Dorsolateral prefrontal cortex (tissue), 120 donors: ENCODE measurements at regions of chr5 and their contacts with region 1.

Region 1: GRCh38 chr5:71782771-71783770 is 64.0 kb downstream of the CARTPT start:
- DNase-seq: peak; percentile 79 to 94 (median 90)
- H3K4me3 ChIP-seq: peak overlapping the region; percentile 5 to 65 (median 47)
- H3K27ac ChIP-seq: peak overlapping the region in 41 of 59 donors; percentile 0 to 76 (median 50)
- H3K27me3 ChIP-seq: no peaks in the 10 kb centered on the region
- CTCF ChIP-seq: peak; percentile 70 to 95 (median 88)

Region 2: GRCh38 chr5:71757590-71758543 is 25.2 kb before region 1 on chr5:
- intact Hi-C with region 1: no loop called
- DNase-seq: peak in 9 of 10 donors; percentile 43 to 84 (median 69)
- H3K4me3 ChIP-seq: peak overlapping the region in 56 of 59 donors; percentile 2 to 65 (median 46)
- H3K27ac ChIP-seq: peak overlapping the region in 3 of 59 donors; percentile 5 to 58 (median 14)
- H3K27me3 ChIP-seq: no peaks in the 10 kb centered on the region
- CTCF ChIP-seq: peak in 55 of 56 donors; percentile 43 to 82 (median 69)

Region 3: GRCh38 chr5:71932655-71933338 is 149.7 kb after region 1 on chr5:
- intact Hi-C with region 1: loop called in 1 of 2 experiments (anchors 10 kb)
- DNase-seq: peak in 9 of 10 donors; percentile 29 to 71 (median 54)
- H3K4me3 ChIP-seq: no peak overlapping the region
- H3K27ac ChIP-seq: peak overlapping the region in 47 of 59 donors; percentile 1 to 76 (median 39)
- H3K27me3 ChIP-seq: no peaks in the 10 kb centered on the region
- CTCF ChIP-seq: peak in 1 of 56 donors; percentile 12

Region 4: DNA sequence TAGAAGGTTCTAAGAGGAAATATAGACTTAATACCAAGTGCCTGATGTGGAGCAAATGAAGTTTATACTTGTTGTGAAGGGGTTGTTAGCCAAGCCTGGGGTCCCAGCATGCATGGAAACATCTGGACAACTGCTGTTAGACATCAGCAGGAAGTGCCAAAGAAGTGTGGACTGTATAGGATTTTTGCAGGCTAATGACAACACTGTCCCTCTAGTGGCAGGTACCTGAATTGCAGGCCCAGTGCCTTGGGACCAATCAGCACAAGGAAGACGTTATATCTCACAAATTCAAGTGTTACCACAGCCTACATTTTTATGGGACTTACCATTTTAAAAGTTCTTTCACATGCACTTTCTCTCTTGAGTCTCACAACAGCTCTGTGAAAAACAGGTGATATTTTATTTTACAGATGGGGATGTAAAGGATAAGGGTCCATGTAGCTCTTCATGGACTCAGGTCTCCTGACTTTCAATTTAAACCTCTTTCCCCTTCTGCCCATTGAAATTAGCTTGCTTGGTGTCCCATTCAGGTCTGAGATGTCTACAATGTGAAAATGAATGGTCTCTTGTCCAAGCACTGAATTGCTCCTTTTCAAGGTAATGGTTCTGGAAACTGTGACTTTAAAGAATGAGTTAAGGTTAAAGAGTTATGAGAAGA is 235.2 kb after region 1 on chr5:
- intact Hi-C with region 1: loop called in 1 of 2 experiments (anchors 5 kb)
- DNase-seq: no peak
- H3K4me3 ChIP-seq: no peak overlapping the region
- H3K27ac ChIP-seq: no peak overlapping the region
- H3K27me3 ChIP-seq: no peaks in the 10 kb centered on the region
- CTCF ChIP-seq: peak; percentile 46 to 80 (median 66)

Region 5: GRCh38 chr5:72108202-72109061 is 325.4 kb after region 1 on chr5:
- intact Hi-C with region 1: loop called (anchors 2 to 5 kb)
- DNase-seq: peak; percentile 67 to 86 (median 78)
- H3K4me3 ChIP-seq: peak overlapping the region; percentile 68 to 97 (median 86)
- H3K27ac ChIP-seq: peak overlapping the region; percentile 46 to 98 (median 92)
- H3K27me3 ChIP-seq: no peaks in the 10 kb centered on the region
- CTCF ChIP-seq: peak in 8 of 56 donors; percentile 9 to 29 (median 15)

Region 6: DNA sequence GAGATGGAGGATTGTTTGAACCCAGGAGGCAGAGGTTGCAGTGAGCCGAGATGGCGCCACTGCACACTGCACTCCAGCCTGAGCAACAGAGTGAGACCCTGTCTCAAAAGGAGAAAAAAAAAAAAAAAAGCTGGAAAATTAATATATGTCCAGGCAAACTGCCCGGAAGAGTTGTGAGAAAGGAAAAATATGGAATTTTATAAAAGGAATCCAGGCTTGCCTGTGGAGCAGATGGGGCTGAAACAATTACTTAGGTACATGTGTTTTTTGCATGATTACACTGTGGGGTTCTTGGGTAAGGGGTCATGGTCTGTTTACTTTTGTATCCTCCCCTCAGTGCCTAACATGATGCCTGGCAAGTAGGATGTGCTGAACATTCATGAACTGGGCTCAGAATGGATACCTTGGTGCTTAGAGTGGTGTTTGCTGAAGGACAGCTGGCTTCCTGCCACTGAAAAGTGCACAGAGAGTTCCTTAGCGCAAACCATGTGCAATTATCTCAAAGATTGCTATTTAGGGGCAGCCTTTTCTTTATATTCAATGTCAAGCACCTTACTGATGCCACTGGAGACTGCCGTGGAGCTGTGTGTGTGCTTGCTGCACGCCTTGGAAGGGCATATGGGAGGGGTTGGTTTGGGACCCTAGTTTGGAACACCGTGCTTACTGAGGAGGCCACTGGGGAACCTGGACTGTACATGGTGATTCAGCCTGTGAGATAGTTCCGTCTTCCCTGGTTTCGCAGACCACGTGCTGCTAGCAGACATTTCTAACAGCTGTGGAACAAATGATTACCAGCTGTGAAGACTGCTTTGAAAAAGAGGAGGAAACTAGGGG is 402.6 kb after region 1 on chr5:
- intact Hi-C with region 1: loop called in 1 of 2 experiments (anchors 10 kb)
- DNase-seq: no peak
- H3K4me3 ChIP-seq: peak overlapping the region in 2 of 59 donors; percentile 5 to 8
- H3K27ac ChIP-seq: peak overlapping the region in 38 of 59 donors; percentile 1 to 92 (median 46)
- H3K27me3 ChIP-seq: no peaks in the 10 kb centered on the region
- CTCF ChIP-seq: no peak

Region 7: GRCh38 chr5:72307968-72308852 is 525.1 kb after region 1 on chr5:
- intact Hi-C with region 1: loop called (anchors 1 to 2 kb)
- DNase-seq: peak; percentile 96 to 98 (median 98)
- H3K4me3 ChIP-seq: peak overlapping the region; percentile 49 to 92 (median 75)
- H3K27ac ChIP-seq: peak overlapping the region; percentile 80 to 99 (median 92)
- H3K27me3 ChIP-seq: no peaks in the 10 kb centered on the region
- CTCF ChIP-seq: peak; percentile 76 to 99 (median 98)

Region 8: GRCh38 chr5:72328172-72328571 is 545.1 kb after region 1 on chr5:
- intact Hi-C with region 1: loop called in 1 of 2 experiments (anchors 5 kb)
- DNase-seq: peak; percentile 44 to 84 (median 72)
- H3K4me3 ChIP-seq: no peak overlapping the region
- H3K27ac ChIP-seq: peak overlapping the region in 31 of 59 donors; percentile 0 to 70 (median 41)
- H3K27me3 ChIP-seq: no peaks in the 10 kb centered on the region
- CTCF ChIP-seq: peak in 9 of 56 donors; percentile 11 to 33 (median 18)